ENCODE measurements at regions of chr11 and their contacts with region 1.

Region 1: DNA sequence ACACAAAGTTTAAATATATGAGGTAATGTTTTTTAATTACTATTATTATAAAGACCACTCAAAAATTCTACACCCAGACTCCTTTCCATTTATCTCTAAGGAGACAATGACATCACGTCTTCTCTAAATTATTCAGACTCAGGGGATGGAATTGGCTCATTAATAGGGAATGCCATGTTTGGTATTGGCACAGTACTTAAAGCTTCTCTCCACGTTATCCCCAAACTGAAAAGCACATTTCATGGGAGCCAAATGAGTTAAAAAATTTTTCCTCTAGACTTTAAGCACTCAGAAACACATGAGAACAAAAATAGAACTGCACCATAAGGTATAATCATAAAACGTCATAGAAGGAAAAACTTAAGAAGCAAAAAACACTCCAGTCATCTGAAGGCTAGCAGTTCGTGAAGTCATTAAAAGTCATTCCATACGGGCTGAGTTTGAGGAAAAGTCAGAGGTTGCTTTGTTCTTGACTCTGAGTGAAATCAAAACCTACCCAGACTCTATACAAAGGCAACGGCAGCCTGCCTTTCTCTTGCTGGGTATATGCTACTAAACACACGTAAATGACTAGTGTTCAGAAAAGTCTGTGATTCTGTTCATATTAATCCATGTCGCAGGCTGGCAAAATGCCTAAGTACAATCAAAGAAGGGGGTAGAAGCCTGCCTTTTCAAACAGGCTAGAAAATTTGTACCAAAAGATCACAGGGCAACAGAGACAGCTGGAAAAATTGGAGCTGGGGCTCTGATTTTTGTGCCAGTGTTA is 8.7 kb upstream of the MPPED2 start:
- DNase-seq: no peak
- ATAC-seq: no peak
- H3K4me3 ChIP-seq: no peak overlapping the region
- H3K27ac ChIP-seq: no peak overlapping the region
- H3K4me1 ChIP-seq: no peaks in the 10 kb centered on the region
- H3K27me3 ChIP-seq: no peaks in the 10 kb centered on the region
- CTCF ChIP-seq: no peak
- POLR2A ChIP-seq: no peak
- RAD21 ChIP-seq: no peak

Region 2: DNA sequence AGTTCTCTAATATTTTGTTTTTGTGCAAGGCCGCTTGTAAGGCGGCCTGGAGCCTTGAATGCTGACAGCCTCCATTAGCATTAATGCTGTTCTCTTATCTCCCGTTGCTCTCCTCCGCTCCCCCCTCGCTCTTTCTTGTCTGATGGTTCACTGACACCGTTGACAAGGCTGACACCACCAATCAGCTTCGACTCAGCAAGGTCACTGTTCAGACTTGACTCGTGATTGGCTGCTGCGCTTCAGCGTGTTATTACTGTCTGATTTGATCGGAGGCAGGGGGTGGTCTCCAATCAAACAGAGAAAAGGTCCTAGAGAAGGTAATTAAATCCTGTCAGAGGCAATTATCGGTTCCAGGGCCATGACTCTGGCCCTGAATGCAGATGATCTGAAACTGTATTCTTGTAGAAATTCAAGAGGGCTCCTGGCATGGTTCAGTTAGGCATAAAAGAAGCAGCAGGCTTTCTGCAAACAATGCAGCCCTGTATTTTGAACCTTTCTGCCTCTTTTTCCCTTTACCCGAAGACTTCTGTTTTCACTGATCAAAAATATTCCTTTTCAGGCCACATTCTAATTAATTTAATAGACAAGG is 40.7 kb after region 1 on chr11:
- CTCF ChIA-PET with region 1: no interaction called
- POLR2A ChIA-PET with region 1: no interaction called
- dilution Hi-C with region 1: no loop called
- in situ Hi-C with region 1: no loop called
- intact Hi-C with region 1: no loop called
- DNase-seq: peak; percentile 1
- ATAC-seq: no peak
- H3K4me3 ChIP-seq: no peak overlapping the region
- H3K27ac ChIP-seq: no peak overlapping the region
- H3K4me1 ChIP-seq: no peaks in the 10 kb centered on the region
- H3K27me3 ChIP-seq: no peaks in the 10 kb centered on the region
- CTCF ChIP-seq: no peak
- POLR2A ChIP-seq: no peak
- RAD21 ChIP-seq: no peak

Region 3: DNA sequence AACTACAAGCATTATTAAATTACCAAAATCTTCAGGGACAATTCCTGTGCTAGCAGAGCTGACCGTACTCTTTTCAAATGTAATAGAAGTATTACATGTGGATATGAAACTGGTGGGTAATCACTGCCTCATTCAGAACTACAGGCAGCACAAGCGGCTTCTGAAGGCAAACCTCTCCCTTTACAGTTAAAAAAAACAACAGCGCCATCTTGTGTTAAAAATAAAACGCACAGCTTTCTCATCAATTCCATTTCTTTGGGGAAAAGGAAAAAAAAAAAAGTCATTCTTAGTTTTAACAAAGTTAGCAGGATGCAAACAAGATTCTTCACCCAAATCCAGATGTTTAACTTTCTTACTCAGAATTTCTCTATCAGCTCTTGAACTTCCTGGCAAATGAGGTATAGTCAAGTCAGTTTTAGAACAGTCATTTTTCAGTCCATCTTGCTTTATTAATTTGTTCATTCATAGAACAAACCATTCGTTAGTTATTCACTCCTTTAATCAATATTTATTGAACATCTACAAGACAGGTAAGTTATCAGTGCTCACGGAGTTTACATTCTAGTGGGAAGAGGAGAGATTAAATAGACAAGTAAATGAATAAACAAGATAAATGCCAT is 323.1 kb after region 1 on chr11:
- CTCF ChIA-PET with region 1: no interaction called
- POLR2A ChIA-PET with region 1: no interaction called
- dilution Hi-C with region 1: no loop called
- in situ Hi-C with region 1: no loop called
- intact Hi-C with region 1: loop called (anchors 10 kb)
- DNase-seq: peak; percentile 42
- ATAC-seq: peak; percentile 56; the same call in 1 of the 2 replicates
- H3K4me3 ChIP-seq: no peak overlapping the region
- H3K27ac ChIP-seq: no peak overlapping the region
- H3K4me1 ChIP-seq: no peaks in the 10 kb centered on the region
- H3K27me3 ChIP-seq: no peaks in the 10 kb centered on the region
- CTCF ChIP-seq: peak; percentile 71
- POLR2A ChIP-seq: no peak
- RAD21 ChIP-seq: peak; percentile 60